ENCODE measurements at regions of chr13 and their contacts with region 1.

Region 1: DNA sequence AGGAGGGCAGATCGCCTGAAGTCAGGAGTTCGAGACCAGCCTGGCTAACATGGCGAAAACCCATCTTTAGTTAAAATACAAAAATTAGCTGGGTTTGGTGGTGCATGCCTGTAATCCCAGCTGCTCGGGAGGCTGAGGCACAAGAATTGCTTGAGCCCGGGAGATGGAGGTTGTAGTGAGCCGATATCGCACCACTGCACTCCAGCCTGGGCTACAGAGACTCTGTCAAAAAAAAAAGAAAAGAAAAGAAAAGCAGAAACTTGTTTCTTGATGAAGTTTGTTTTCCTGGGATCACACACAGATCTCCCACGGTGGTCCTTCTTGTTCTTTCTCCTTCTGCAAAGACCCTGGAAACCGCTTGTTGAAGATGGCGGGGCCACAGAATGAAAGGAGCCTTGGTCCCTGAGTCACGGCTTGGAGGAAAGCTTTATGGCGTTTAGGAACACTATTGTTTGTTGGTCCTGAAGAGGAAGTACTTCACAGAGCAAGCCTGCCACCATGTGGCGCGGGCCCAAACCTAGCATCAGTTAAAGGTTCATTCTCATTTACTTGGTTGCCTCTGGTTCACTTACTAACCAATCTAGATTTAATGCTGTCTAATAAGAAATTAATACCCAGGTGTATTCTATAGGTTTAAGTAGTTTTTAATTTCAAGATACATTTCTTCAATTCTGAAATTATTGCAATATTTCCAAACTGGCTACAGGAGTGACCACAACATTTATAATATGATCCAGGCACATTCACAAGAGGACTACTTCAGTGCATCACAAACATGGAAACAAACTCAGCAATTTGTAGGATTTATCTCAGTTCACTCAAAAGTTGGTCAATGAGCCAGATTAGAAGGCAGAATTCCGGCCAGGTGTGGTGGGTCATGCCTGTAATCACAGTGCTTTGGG is 21.3 kb upstream of the ARL11 start:
- DNase-seq: peak; percentile 62 to 79
- ATAC-seq: peak; percentile 97 to 99
- H3K4me3 ChIP-seq: peak overlapping the region; percentile 10 to 55 (median 28)
- H3K27ac ChIP-seq: no peak overlapping the region
- H3K4me1 ChIP-seq: no peaks in the 10 kb centered on the region
- H3K27me3 ChIP-seq: no peaks in the 10 kb centered on the region
- CTCF ChIP-seq: peak; percentile 59 to 79 (median 71)
- POLR2A ChIP-seq: no peak

Region 2: GRCh38 chr13:49292742-49293486 is 314.1 kb before region 1 on chr13:
- in situ Hi-C with region 1: loop called in 1 of 4 experiments (anchors 10 kb)
- intact Hi-C with region 1: no loop called
- DNase-seq: no peak
- ATAC-seq: peak in 1 of 2 donors; percentile 26
- H3K4me3 ChIP-seq: no peak overlapping the region
- H3K27ac ChIP-seq: no peak overlapping the region
- H3K4me1 ChIP-seq: peaks cover 0 to 5% of the 10 kb centered on the region in 2 donors
- H3K27me3 ChIP-seq: no peaks in the 10 kb centered on the region
- CTCF ChIP-seq: no peak
- POLR2A ChIP-seq: no peak

Region 3: GRCh38 chr13:49300739-49301589 is 306.0 kb before region 1 on chr13:
- in situ Hi-C with region 1: loop called (anchors 5 to 10 kb)
- intact Hi-C with region 1: loop called (anchors 1 kb)
- DNase-seq: peak in 1 of 2 donors; percentile 36
- ATAC-seq: peak; percentile 87 to 89
- H3K4me3 ChIP-seq: peak overlapping the region; percentile 27 to 48 (median 36)
- H3K27ac ChIP-seq: peak overlapping the region in 3 of 4 donors; percentile 14 to 24 (median 20)
- H3K4me1 ChIP-seq: no peaks in the 10 kb centered on the region
- H3K27me3 ChIP-seq: no peaks in the 10 kb centered on the region
- CTCF ChIP-seq: peak; percentile 76 to 85 (median 82)
- POLR2A ChIP-seq: no peak

Region 4: GRCh38 chr13:49308089-49308875 is 298.7 kb before region 1 on chr13:
- in situ Hi-C with region 1: loop called in 3 of 4 experiments (anchors 5 to 10 kb)
- intact Hi-C with region 1: no loop called
- DNase-seq: peak; percentile 80 to 85
- ATAC-seq: peak; percentile 93 to 96
- H3K4me3 ChIP-seq: peak overlapping the region in 1 of 4 donors; percentile 27
- H3K27ac ChIP-seq: peak overlapping the region; percentile 64 to 74 (median 70)
- H3K4me1 ChIP-seq: peaks cover 20 to 24% of the 10 kb centered on the region in 2 donors
- H3K27me3 ChIP-seq: no peaks in the 10 kb centered on the region
- CTCF ChIP-seq: no peak
- POLR2A ChIP-seq: peak in 1 of 2 donors; percentile 26

Region 5: DNA sequence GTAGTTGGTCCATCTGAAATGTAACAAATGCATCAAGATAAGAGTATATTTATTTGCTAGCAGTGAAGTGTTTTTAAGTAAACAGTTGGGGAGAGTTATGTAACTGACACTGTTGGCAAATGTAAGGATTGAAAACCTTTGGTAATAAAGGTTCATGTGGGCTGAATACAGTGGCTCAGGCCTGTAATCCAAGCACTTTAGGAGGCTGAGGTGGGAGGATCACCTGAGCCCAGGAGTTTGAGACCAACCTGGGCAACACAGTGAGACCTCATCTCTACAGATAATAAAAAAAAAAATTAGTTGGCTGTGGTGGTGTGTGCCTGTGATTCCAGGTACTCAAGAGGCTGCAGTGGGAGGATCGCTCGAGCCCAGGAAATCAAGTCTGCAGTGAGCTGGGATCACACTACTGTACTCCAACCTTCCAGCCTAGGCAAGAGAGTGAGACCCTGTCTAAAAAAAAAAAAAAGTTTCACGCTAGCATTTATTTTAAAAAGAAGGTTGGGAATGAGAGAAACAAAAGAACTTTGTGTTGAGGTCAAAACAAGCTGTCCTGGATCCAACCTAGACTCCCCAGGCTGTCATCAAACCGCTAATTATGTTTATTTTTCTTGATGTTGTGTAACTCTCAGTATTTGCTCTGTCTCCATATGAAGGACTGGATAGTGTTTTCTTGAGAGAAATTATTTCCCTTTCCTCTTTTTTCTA is 142.2 kb before region 1 on chr13:
- in situ Hi-C with region 1: no loop called
- intact Hi-C with region 1: no loop called
- DNase-seq: no peak
- ATAC-seq: no peak
- H3K4me3 ChIP-seq: no peak overlapping the region
- H3K27ac ChIP-seq: no peak overlapping the region
- H3K4me1 ChIP-seq: no peaks in the 10 kb centered on the region
- H3K27me3 ChIP-seq: no peaks in the 10 kb centered on the region
- CTCF ChIP-seq: no peak
- POLR2A ChIP-seq: no peak

Region 6: DNA sequence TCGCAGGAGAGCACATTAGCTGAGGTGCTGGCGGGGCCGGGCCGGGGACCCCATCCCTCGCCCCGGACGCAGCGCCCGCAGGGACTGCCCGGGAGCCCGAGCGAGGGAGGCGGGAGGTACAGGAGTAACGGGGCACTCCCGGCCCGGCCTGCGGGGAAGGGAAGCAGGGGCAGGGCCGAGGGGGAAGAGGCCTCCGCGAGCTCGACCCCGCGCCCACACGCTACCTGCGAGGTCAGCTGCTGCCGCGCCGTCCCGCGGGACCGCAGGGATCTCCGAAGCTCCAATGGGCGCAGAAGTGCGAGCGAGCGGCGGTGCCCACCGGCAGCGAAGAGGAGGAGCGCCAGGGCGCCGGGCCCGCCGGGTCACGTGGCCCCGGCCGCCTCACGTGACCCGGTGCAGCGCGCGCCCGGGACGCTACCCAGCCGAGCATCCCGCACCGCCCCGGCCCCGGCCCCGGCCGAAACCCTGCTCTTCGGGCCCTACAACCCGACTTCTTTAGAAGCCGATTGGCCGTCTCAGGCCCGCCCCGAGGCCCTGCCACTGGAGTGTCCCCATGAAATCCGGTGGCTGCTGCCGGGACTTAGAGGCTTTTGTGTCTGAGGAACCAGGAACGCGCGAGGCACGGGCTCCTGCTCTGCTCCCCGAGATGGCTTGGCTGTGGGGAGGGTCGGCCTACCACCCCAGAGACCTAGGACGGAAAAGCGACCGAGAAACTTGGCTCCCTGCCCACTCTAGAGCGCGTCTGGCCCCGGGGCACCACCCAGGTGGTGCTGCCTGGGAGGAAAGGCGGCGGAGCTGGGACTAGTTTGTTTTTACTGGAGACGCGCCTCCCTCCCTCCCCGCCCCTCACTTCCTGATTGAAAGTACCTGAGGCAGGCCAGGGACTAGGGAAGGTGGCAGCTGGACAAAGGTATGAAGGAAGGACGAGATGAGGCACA is 21.5 kb before region 1 on chr13 and contains the start of gene RCBTB1:
- in situ Hi-C with region 1: no loop called
- intact Hi-C with region 1: loop called (anchors 2 kb)
- DNase-seq: peak; percentile 8 to 41
- ATAC-seq: peak; percentile 94 to 96
- H3K4me3 ChIP-seq: peak within 1 kb of the TSS; percentile 74 to 95 (median 92)
- H3K27ac ChIP-seq: peak within 1 kb of the TSS; percentile 61 to 77 (median 72)
- H3K4me1 ChIP-seq: peaks cover 7 to 8% of the 10 kb centered on the region in 2 donors
- H3K27me3 ChIP-seq: no peaks in the 10 kb centered on the region
- CTCF ChIP-seq: peak in 1 of 5 experiments; percentile 18
- POLR2A ChIP-seq: peak in 1 of 2 donors; percentile 29
- total RNA-seq, gene RCBTB1: 5.3 to 14.4 (median 5.7) TPM

Measured in gastrocnemius medialis (tissue), 4 donors.